MCF 10A (cell line): ENCODE measurements at regions of chr6 and their contacts with region 1.

Region 1: GRCh38 chr6:144582939-144583613 is 297.9 kb downstream of the UTRN start:
- DNase-seq: no peak
- H3K4me3 Mint-ChIP-seq: no peak overlapping the region
- H3K27ac Mint-ChIP-seq: no peak overlapping the region
- H3K4me1 Mint-ChIP-seq: no peaks in the 10 kb centered on the region
- H3K27me3 Mint-ChIP-seq: no peaks in the 10 kb centered on the region
- CTCF ChIP-seq: no peak

Region 2: GRCh38 chr6:144621332-144621731 is 38.3 kb after region 1 on chr6:
- CTCF ChIA-PET with region 1: no interaction called
- POLR2A ChIA-PET with region 1: no interaction called
- intact Hi-C with region 1: no loop called
- DNase-seq: no peak
- H3K4me3 Mint-ChIP-seq: no peak overlapping the region
- H3K27ac Mint-ChIP-seq: no peak overlapping the region
- H3K4me1 Mint-ChIP-seq: no peaks in the 10 kb centered on the region
- H3K27me3 Mint-ChIP-seq: no peaks in the 10 kb centered on the region
- CTCF ChIP-seq: no peak

Region 3: GRCh38 chr6:144797881-144798595 is 215.0 kb after region 1 on chr6:
- CTCF ChIA-PET with region 1: interaction called, 4 read pairs
- POLR2A ChIA-PET with region 1: no interaction called
- intact Hi-C with region 1: loop called (anchors 10 kb)
- DNase-seq: peak; percentile 19
- H3K4me3 Mint-ChIP-seq: no peak overlapping the region
- H3K27ac Mint-ChIP-seq: no peak overlapping the region
- H3K4me1 Mint-ChIP-seq: no peaks in the 10 kb centered on the region
- H3K27me3 Mint-ChIP-seq: no peaks in the 10 kb centered on the region
- CTCF ChIP-seq: no peak

Region 4: GRCh38 chr6:144931172-144932035 is 348.3 kb after region 1 on chr6:
- CTCF ChIA-PET with region 1: interaction called, 6 read pairs
- POLR2A ChIA-PET with region 1: no interaction called
- intact Hi-C with region 1: loop called (anchors 1 kb)
- DNase-seq: peak; percentile 59
- H3K4me3 Mint-ChIP-seq: no peak overlapping the region
- H3K27ac Mint-ChIP-seq: no peak overlapping the region
- H3K4me1 Mint-ChIP-seq: no peaks in the 10 kb centered on the region
- H3K27me3 Mint-ChIP-seq: no peaks in the 10 kb centered on the region
- CTCF ChIP-seq: peak; percentile 52

Region 5: GRCh38 chr6:145028144-145028818 is 445.2 kb after region 1 on chr6:
- CTCF ChIA-PET with region 1: interaction called, 3 read pairs
- POLR2A ChIA-PET with region 1: no interaction called
- intact Hi-C with region 1: loop called (anchors 2 kb)
- DNase-seq: peak; percentile 60
- H3K4me3 Mint-ChIP-seq: no peak overlapping the region
- H3K27ac Mint-ChIP-seq: no peak overlapping the region
- H3K4me1 Mint-ChIP-seq: no peaks in the 10 kb centered on the region
- H3K27me3 Mint-ChIP-seq: no peaks in the 10 kb centered on the region
- CTCF ChIP-seq: peak; percentile 23

Region 6: DNA sequence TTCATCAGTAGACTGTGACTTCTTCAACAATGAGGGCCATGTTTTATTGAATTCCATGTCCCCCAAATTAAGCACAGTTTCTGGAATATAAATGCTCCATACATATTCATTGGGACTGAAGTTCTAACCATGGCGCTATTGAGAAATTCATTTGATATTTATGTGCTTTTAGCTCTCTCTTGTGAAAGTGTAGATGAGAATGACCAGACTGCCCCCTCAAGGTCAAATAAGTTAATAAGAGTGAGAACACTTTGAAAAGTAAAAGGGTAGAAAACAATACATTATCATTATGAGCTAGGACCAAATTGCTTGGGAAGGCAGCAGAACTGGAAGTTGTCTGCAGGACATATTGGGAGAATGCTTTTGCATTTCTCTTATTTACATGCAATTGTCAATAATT is 554.4 kb after region 1 on chr6:
- CTCF ChIA-PET with region 1: interaction called, 3 read pairs
- POLR2A ChIA-PET with region 1: no interaction called
- intact Hi-C with region 1: loop called (anchors 1 kb)
- DNase-seq: peak; percentile 47
- H3K4me3 Mint-ChIP-seq: no peak overlapping the region
- H3K27ac Mint-ChIP-seq: no peak overlapping the region
- H3K4me1 Mint-ChIP-seq: peaks cover 5% of the 10 kb centered on the region
- H3K27me3 Mint-ChIP-seq: no peaks in the 10 kb centered on the region
- CTCF ChIP-seq: peak; percentile 32

Region 7: DNA sequence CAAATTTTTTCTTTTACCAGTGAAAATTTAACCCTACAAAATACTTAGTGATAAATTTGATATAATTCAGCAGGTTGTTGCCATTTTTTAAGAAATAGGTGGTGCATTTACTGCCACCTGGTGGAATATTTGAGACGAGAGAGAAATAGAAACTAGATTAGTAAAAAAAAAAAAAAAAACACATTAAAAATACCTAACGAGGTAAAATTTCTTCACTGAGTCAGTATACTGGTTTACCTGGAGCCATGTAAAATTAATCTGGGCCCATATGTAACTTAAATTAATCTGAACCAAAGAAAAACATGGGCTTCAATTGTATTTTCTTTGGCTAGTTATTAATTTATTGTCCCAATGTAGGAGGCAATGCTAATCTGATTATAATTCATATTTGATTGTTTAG is 631.5 kb after region 1 on chr6:
- CTCF ChIA-PET with region 1: interaction called, 4 read pairs
- POLR2A ChIA-PET with region 1: no interaction called
- intact Hi-C with region 1: loop called (anchors 1 kb)
- DNase-seq: peak; percentile 60
- H3K4me3 Mint-ChIP-seq: no peak overlapping the region
- H3K27ac Mint-ChIP-seq: peak overlapping the region; percentile 59
- H3K4me1 Mint-ChIP-seq: no peaks in the 10 kb centered on the region
- H3K27me3 Mint-ChIP-seq: no peaks in the 10 kb centered on the region
- CTCF ChIP-seq: peak; percentile 36

Region 8: DNA sequence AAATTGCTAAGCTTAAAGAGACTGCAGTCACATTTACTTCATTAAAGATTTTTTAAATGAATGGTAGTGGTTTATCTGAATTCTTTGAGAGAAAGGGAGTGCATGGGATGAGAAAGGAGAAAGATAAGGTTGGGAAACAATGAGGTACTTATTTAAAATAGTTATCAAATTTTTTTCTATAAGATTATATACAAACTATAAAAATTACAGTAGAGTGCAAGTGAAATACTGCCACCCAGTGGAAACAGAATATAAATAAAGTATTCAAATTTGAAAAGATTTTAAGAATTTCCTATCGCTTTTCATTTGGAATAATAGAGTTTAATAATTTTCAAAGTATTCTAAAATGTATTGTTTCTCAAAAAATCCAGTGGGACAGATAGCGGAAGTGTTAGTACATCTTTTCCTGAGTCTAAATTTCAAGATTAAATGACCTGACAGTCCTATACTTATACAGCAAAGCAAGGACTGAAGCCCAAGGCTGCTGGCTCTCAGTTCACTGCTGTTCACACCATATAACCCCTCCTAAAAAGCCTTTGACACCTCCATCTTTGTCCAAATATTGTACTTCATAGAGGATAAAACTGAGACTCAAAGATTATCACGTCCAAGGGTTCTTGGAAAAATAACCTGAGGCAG is 1121.2 kb after region 1 on chr6:
- CTCF ChIA-PET with region 1: interaction called, 5 read pairs
- POLR2A ChIA-PET with region 1: no interaction called
- intact Hi-C with region 1: loop called (anchors 5 kb)
- DNase-seq: peak; percentile 19
- H3K4me3 Mint-ChIP-seq: no peak overlapping the region
- H3K27ac Mint-ChIP-seq: no peak overlapping the region
- H3K4me1 Mint-ChIP-seq: peaks cover 11% of the 10 kb centered on the region
- H3K27me3 Mint-ChIP-seq: no peaks in the 10 kb centered on the region
- CTCF ChIP-seq: peak; percentile 51